ENCODE measurements at regions of chr3 and their contacts with region 1.

Region 1: DNA sequence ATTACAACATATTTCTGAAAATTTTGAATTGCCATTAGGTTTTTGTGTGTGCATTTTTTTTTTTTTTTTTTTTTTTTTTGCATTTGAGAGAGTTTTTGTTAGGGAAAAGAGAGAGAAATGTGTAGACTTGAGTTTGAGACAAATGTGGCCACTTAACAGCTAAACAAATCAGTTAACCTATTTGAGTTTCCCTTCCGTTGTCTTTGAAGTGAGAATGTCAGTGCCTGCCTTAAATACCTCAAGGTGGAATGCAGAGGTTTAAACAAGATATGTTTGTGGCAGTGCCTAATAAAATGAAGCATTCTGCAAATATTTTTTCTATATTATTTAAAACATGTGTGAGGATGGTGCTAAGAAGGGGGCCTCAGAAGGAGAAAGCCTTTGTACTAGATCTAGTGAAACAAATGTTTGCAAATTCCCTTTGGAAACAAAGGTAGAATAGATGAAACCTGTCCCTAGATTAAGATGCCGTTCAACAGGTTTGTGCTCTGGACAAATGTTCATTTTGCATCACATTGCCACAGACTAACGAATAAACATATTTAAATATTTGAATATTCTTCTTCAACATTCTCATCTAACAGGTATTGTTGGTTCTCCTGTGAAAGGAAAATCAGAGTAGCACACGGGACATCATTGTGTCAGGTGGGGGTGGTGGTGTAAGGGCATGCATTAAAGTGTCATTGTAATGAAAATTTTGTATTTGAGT is 80.7 kb downstream of the SATB1 start:
- DNase-seq: no peak
- H3K4me3 Mint-ChIP-seq: no peak overlapping the region
- H3K27ac Mint-ChIP-seq: no peak overlapping the region
- H3K4me1 Mint-ChIP-seq: peaks cover 6% of the 10 kb centered on the region
- H3K27me3 Mint-ChIP-seq: peaks cover 9% of the 10 kb centered on the region

Region 2: GRCh38 chr3:17233398-17233800 is 1111.1 kb before region 1 on chr3:
- intact Hi-C with region 1: no loop called
- DNase-seq: peak; percentile 84
- H3K4me3 Mint-ChIP-seq: no peak overlapping the region
- H3K27ac Mint-ChIP-seq: no peak overlapping the region
- H3K4me1 Mint-ChIP-seq: peaks cover 12% of the 10 kb centered on the region
- H3K27me3 Mint-ChIP-seq: no peaks in the 10 kb centered on the region

Region 3: GRCh38 chr3:17894434-17895060 is 449.9 kb before region 1 on chr3:
- intact Hi-C with region 1: loop called (anchors 10 kb)
- DNase-seq: peak; percentile 80
- H3K4me3 Mint-ChIP-seq: no peak overlapping the region
- H3K27ac Mint-ChIP-seq: no peak overlapping the region
- H3K4me1 Mint-ChIP-seq: no peaks in the 10 kb centered on the region
- H3K27me3 Mint-ChIP-seq: peaks cover 13% of the 10 kb centered on the region

Region 4: DNA sequence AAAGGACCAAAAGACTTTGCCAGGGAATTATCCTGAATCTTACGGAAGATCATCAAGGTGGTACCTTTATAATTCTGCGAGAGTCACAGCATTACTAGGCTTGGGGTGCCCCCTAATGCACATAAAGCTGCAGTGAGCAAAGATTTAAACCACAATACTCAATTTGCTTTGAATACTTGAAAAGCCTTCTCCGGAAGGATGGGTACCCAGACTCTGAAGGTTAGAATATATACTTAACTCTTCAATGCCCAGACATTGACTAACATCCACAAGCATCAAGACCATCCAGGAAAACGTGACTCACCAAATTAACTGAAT is 686.0 kb after region 1 on chr3:
- intact Hi-C with region 1: no loop called
- DNase-seq: no peak
- H3K4me3 Mint-ChIP-seq: no peak overlapping the region
- H3K27ac Mint-ChIP-seq: no peak overlapping the region
- H3K4me1 Mint-ChIP-seq: no peaks in the 10 kb centered on the region
- H3K27me3 Mint-ChIP-seq: peaks cover 3% of the 10 kb centered on the region